Calu3 (cell line): ENCODE measurements at regions of chrX and their contacts with region 1.

Region 1: DNA sequence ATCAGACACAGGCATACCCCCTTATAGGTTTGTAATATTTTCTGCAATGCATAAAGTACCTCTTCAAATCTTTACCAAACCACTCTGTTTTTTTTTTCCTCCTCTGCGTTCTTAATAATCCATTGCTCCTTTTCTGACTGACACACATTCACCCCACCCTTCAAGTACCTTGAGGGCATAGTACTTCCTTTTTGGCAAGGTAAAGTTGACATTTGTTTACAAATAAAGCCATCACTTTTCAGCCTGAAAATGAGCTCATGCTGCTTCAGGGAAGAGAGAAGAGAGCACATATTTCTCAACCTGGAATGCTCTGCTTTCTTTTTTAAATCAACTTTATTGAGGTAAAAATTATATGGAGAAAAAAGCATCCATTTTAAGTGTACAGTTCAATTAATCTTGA is 113.8 kb downstream of the AGTR2 start:
- DNase-seq: no peak
- H3K4me3 Mint-ChIP-seq: no peak overlapping the region
- H3K27ac Mint-ChIP-seq: peak overlapping the region; percentile 75
- H3K4me1 Mint-ChIP-seq: peaks cover 38% of the 10 kb centered on the region
- H3K27me3 Mint-ChIP-seq: no peaks in the 10 kb centered on the region
- CTCF ChIP-seq: no peak

Region 2: GRCh38 chrX:116357329-116357728 is 72.9 kb after region 1 on chrX:
- CTCF ChIA-PET with region 1: no interaction called
- intact Hi-C with region 1: loop called (anchors 5 kb)
- DNase-seq: peak; percentile 2
- H3K4me3 Mint-ChIP-seq: no peak overlapping the region
- H3K27ac Mint-ChIP-seq: peak overlapping the region; percentile 24
- H3K4me1 Mint-ChIP-seq: peaks cover 11% of the 10 kb centered on the region
- H3K27me3 Mint-ChIP-seq: no peaks in the 10 kb centered on the region
- CTCF ChIP-seq: no peak